ENCODE measurements at regions of chr17 and their contacts with region 1.

Region 1: GRCh38 chr17:46940621-46941404 is 17.9 kb downstream of the GOSR2 start:
- DNase-seq: peak; percentile 74 to 77
- H3K4me3 ChIP-seq: no peak overlapping the region
- H3K27ac ChIP-seq: no peak overlapping the region
- H3K4me1 ChIP-seq: peaks cover 0 to 22% (median 17%) of the 10 kb centered on the region in 4 donors
- H3K27me3 ChIP-seq: peaks cover 0 to 2% of the 10 kb centered on the region in 2 donors
- CTCF ChIP-seq: peak; percentile 64 to 65

Region 2: GRCh38 chr17:46995841-46996571 is 55.2 kb after region 1 on chr17:
- intact Hi-C with region 1: loop called (anchors 5 kb)
- DNase-seq: no peak
- H3K4me3 ChIP-seq: no peak overlapping the region
- H3K27ac ChIP-seq: no peak overlapping the region
- H3K4me1 ChIP-seq: no peaks in the 10 kb centered on the region
- H3K27me3 ChIP-seq: no peaks in the 10 kb centered on the region
- CTCF ChIP-seq: no peak

Measured in tibial artery (tissue), 4 donors.